ENCODE measurements at regions of chr5 and their contacts with region 1.

Region 1: DNA sequence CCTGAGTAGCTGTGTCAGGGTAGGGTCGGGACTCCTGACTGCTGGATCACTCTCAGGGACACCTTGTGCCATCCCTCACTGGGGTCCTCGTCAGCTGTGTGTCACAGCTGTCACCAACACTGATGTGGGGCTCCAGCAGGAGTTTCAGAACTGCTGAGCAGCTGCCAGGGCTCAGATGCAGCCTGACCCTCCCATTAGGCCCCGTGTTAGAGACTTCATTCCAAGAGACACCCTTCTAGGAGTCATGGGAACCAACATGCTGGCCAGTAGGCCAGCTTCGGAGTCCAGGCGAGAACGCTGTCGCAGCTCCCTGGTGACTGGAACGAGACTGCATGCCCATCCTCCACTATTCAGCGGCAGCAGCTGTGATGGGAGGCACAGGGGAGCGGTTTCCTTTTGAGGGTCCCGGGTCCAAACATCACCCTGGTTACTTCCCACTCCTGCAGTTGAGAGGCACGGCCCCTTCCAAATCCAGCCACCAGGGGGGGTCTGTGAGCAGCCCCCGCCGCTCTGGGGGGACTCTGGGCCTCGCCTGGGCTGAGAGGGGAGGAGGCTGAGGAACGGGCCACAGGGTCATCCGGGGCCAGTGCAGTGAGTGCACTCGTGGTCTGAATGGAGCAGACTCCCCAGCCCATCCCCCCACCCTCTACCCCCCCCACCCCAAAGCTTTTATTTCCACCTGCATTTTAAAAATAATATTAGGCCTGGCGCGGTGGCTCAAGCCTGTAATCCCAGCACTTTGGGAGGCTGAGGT is 12.6 kb upstream of the TCF7 start:
- DNase-seq: peak; percentile 83
- H3K4me3 Mint-ChIP-seq: peak overlapping the region; percentile 29
- H3K27ac Mint-ChIP-seq: no peak overlapping the region
- H3K4me1 Mint-ChIP-seq: peaks cover 82% of the 10 kb centered on the region
- H3K27me3 Mint-ChIP-seq: no peaks in the 10 kb centered on the region

Region 2: GRCh38 chr5:134077926-134078580 is 23.8 kb before region 1 on chr5:
- CTCF ChIA-PET with region 1: interaction called, 54 read pairs
- POLR2A ChIA-PET with region 1: interaction called, 10 read pairs
- intact Hi-C with region 1: no loop called
- DNase-seq: peak; percentile 61
- H3K4me3 Mint-ChIP-seq: no peak overlapping the region
- H3K27ac Mint-ChIP-seq: peak overlapping the region; percentile 75
- H3K4me1 Mint-ChIP-seq: peaks cover 61% of the 10 kb centered on the region
- H3K27me3 Mint-ChIP-seq: no peaks in the 10 kb centered on the region

Region 3: GRCh38 chr5:134113902-134114875 is 12.3 kb after region 1 on chr5 and contains the start of gene TCF7:
- CTCF ChIA-PET with region 1: interaction called, 136 read pairs
- POLR2A ChIA-PET with region 1: interaction called, 32 read pairs
- intact Hi-C with region 1: loop called (anchors 1 kb)
- DNase-seq: peak; percentile 86
- H3K4me3 Mint-ChIP-seq: peak within 1 kb of the TSS; percentile 84
- H3K27ac Mint-ChIP-seq: peak within 1 kb of the TSS; percentile 86
- H3K4me1 Mint-ChIP-seq: peaks cover 66% of the 10 kb centered on the region
- H3K27me3 Mint-ChIP-seq: no peaks in the 10 kb centered on the region
- total RNA-seq, gene TCF7: 59.3 to 65.6 TPM

Region 4: DNA sequence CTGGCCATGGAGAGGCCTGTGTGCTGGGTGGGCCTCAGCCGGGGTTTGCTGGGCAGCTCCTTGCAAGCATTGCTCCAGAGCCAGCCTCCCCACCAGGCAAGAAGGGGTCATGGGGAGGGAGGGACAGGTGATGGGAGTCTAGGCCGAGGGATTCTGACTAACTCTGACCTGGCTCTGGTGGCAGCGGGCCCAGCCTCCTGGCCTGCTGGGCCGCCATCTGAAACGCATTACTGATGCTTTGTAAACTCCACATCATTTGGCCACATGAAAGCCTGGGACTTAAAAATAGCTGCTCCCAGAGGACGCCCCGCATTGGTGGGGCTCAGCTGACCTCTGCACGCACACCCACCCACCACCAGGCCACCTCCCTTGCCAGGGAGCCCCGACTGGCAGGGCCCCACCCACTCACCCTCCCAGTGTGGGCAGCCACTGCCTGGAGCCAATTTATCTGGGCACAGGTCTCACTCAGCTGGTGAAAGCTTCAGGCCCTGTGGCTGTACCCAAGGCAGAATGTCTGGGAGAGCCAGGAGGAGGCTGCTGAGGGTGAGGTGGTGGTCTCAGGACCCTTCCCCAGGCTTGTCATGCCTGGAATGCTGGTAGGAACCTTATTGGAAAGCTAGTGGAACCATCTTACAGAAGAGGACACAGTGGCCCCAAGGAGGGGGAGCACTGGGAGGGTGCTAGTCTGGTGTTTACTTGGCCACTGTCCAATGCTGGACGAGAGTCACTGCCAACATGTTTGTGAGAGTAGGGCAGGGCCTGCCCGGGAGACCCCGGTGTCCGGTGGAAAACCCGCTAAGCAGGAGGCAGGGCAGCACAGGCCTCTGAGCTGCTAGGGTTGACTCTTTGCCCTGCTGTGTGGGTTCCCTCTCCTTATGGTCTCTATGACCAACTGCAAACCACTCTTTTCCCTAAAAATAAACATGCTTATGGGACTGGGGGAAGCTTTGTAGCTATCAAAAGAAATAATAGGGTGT is 23.5 kb after region 1 on chr5:
- CTCF ChIA-PET with region 1: interaction called, 63 read pairs
- POLR2A ChIA-PET with region 1: interaction called, 22 read pairs
- intact Hi-C with region 1: no loop called
- DNase-seq: peak; percentile 49
- H3K4me3 Mint-ChIP-seq: peak overlapping the region; percentile 69
- H3K27ac Mint-ChIP-seq: peak overlapping the region; percentile 90
- H3K4me1 Mint-ChIP-seq: peaks cover 99% of the 10 kb centered on the region
- H3K27me3 Mint-ChIP-seq: no peaks in the 10 kb centered on the region

Region 5: GRCh38 chr5:134140530-134141201 is 38.8 kb after region 1 on chr5:
- CTCF ChIA-PET with region 1: interaction called, 6 read pairs
- POLR2A ChIA-PET with region 1: no interaction called
- intact Hi-C with region 1: loop called (anchors 1 kb)
- DNase-seq: peak; percentile 81
- H3K4me3 Mint-ChIP-seq: no peak overlapping the region
- H3K27ac Mint-ChIP-seq: no peak overlapping the region
- H3K4me1 Mint-ChIP-seq: peaks cover 57% of the 10 kb centered on the region
- H3K27me3 Mint-ChIP-seq: no peaks in the 10 kb centered on the region

Measured in activated CD4-positive, alpha-beta memory T cell treated with anti-CD3 and anti-CD28 coated beads for 36 hours (primary cell).